SK-N-SH (cell line): ENCODE measurements at regions of chr7 and their contacts with region 1.

Region 1: DNA sequence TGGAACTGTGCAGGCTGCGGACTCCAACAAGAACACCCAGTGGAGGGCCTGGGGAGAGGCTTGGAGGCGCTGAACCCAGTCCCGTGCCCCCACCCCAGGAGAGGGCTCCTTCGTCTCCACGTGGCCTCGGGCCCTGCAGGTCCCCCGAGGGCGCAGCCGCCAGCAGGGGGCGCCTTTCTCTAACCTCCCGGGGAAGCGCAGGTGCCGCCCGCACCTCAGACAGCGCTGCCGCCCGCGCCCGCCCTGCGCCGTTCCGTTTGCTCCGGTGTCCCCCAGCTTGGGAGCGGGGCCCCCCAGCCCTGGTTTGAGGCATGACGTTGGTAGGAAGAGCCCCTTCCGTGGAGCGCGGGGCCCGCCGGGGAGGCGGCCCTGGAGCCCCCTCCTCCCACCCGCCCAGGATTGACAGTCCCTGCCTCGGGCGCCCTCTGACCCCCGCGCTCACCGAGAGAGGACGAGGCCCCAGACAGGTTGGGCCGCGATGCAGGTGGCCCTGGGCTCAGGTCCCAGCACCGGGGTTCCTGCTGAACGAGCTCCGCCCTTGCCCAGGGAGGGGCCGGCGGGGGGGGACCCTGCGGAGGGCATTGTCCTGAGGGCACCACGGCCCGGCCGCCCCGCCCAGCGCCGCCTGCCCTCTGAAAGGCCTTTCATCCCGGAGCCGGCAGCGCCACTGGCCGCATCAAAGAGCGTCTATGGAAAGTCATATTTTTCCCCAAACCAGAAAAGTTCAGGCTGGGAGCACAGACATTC is 42.8 kb downstream of the FOXL3 start:
- DNase-seq: peak; percentile 97
- H3K4me3 ChIP-seq: peak overlapping the region; percentile 36 to 58
- H3K27ac ChIP-seq: no peak overlapping the region
- H3K4me1 ChIP-seq: peaks cover 0 to 3% of the 10 kb centered on the region in 2 experiments; a peak in 1 of 4 replicates
- H3K27me3 ChIP-seq: peaks cover 26% of the 10 kb centered on the region; the same call in 1 of the 2 replicates
- CTCF ChIP-seq: peak; percentile 82
- EP300 ChIP-seq: no peak
- RAD21 ChIP-seq: peak; percentile 69

Region 2: GRCh38 chr7:665736-666453 is 333.1 kb after region 1 on chr7:
- CTCF ChIA-PET with region 1: interaction called, 10 read pairs
- POLR2A ChIA-PET with region 1: no interaction called
- DNase-seq: peak; percentile 88
- H3K4me3 ChIP-seq: no peak overlapping the region
- H3K27ac ChIP-seq: peak overlapping the region in 1 of 2 experiments; percentile 93; a peak in 2 of 4 replicates
- H3K4me1 ChIP-seq: peaks cover 0 to 34% of the 10 kb centered on the region in 2 experiments; a peak in 2 of 4 replicates
- H3K27me3 ChIP-seq: no peaks in the 10 kb centered on the region
- CTCF ChIP-seq: peak; percentile 15; the same call in 1 of the 2 replicates
- EP300 ChIP-seq: peak in 1 of 2 experiments; percentile 66; a peak in 1 of 4 replicates
- RAD21 ChIP-seq: peak; percentile 10; the same call in 1 of the 2 replicates